ENCODE measurements at regions of chr6 and their contacts with region 1.

Region 1: DNA sequence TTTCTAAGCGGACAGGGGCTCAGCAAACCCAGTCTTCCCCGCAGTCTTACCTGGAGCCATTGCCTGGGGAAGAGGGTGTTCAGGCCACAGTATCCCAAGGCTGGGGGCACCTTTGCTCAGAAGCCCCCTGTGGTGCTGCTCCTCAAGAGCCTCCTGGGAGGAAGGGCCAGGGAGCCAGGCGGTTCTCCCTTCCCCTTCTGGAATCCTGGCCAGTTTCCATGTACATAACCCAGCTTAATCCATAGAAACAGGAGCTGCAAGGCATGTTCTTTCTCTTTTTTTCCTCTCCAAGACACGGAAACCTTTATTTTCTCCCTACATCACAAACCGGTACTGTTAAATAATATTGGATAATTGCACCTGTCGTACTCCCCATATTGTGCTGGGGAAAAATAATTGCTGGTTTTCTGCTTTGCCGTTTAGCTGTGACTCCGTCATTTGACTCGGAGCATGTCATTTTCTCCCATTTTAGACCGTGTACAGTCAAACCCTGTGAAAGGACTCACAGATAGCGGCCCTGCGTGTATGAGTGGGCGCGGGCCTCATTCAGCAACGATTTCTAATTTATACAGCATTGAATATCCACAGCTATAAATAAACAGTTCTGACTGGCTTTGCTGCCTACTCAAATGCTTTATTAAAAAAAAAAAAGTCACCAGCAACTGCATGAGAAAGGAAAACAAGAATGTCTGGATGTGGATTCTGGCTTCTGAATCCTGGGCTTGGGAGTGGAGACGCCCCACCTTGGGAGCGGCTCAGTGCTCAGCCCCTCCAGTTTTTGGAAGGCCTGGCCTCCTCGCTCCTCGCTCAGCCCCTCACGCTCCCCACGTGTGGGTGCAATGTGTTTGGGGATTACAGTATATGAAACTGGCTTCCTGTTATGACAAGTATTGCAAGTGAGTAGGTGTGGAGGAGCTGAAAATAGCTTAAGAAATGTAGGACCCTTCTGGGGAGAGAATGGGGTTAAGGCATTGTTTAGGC is 67.3 kb downstream of the ADTRP start:
- DNase-seq: no peak
- H3K4me3 Mint-ChIP-seq: peak overlapping the region; percentile 54
- H3K27ac Mint-ChIP-seq: peak overlapping the region; percentile 96
- H3K4me1 Mint-ChIP-seq: peaks cover 59% of the 10 kb centered on the region
- H3K27me3 Mint-ChIP-seq: no peaks in the 10 kb centered on the region

Region 2: DNA sequence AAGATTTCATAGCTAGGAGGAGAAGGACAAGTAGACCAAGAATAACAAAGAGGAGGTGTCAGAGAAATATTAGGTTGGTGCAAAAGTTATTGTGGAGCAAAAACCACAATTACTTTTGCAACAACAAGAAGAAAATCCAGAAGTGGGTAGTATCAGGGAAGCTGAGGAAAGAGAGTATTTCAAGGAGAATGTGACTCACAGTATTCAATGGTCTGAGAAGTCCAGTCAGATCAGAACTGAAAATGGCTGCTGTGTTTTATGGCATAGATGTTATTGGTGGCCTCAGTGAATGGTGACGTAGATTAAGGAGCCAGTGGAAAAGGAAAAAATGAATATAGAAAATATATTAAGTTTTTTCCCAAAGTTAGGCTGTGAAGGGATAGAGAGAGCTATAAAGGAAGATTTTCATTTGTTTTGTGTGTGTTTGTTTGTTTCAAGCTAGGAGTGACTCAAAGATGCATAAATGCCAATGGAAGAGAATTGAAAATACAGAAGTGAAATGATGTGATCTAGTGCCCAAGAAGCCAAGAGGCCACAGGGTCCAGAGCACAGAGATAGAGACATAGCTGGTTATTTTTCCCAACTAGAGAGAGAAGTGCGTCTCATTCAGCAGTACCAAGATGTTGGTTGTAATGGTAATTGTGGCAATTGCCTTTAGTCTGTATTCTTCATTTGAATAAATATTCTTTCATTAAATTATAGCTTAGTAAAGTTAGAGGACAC is 45.5 kb before region 1 on chr6:
- intact Hi-C with region 1: loop called (anchors 5 kb)
- DNase-seq: no peak
- H3K4me3 Mint-ChIP-seq: no peak overlapping the region
- H3K27ac Mint-ChIP-seq: no peak overlapping the region
- H3K4me1 Mint-ChIP-seq: peaks cover 9% of the 10 kb centered on the region
- H3K27me3 Mint-ChIP-seq: peaks cover 8% of the 10 kb centered on the region

Region 3: DNA sequence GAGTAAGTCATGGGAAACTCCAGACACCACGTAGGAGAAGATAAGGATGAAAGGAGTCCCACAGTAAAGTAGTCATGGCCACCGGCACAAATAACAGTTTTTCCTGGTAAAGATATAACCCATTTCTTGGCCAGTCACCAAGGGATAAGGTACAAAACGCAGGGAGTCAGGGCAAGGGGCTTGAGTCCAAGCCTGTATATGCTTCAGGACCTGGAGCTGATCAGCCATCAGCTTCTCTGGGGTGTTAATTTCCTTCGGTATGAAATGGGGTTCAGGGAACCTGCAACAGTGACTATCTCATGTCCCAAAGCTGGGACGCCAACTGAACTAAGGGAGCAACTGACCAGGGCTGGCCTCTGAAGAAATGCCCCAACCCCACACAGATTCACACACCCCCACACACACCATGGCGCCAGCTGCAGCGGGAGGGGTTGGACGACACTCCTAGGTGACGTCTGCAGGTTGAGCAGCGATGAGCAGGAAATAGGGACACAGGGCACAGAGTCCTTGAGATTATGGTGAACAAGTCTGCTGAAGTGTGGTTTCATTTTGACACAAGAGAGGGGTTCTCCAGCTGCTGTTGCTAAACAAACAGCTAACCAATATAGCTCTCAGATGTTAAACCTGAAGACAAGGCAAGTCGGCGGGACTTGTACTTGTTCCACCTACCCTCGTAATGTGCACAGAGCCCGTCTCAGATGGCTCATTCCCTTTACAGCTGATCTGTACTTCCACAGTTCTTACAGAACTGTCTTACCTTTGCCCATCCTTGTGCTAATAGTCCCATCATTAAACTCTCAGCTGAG is 74.7 kb after region 1 on chr6:
- intact Hi-C with region 1: loop called (anchors 1 kb)
- DNase-seq: peak; percentile 20
- H3K4me3 Mint-ChIP-seq: peak overlapping the region; percentile 40
- H3K27ac Mint-ChIP-seq: no peak overlapping the region
- H3K4me1 Mint-ChIP-seq: peaks cover 6% of the 10 kb centered on the region
- H3K27me3 Mint-ChIP-seq: no peaks in the 10 kb centered on the region

Region 4: GRCh38 chr6:12051861-12052368 is 340.6 kb after region 1 on chr6:
- intact Hi-C with region 1: loop called (anchors 1 kb)
- DNase-seq: peak; percentile 70
- H3K4me3 Mint-ChIP-seq: peak overlapping the region; percentile 59
- H3K27ac Mint-ChIP-seq: peak overlapping the region; percentile 91
- H3K4me1 Mint-ChIP-seq: peaks cover 69% of the 10 kb centered on the region
- H3K27me3 Mint-ChIP-seq: no peaks in the 10 kb centered on the region

Region 5: GRCh38 chr6:12233693-12234571 is 522.6 kb after region 1 on chr6:
- intact Hi-C with region 1: loop called (anchors 5 kb)
- DNase-seq: peak; percentile 27
- H3K4me3 Mint-ChIP-seq: no peak overlapping the region
- H3K27ac Mint-ChIP-seq: peak overlapping the region; percentile 9
- H3K4me1 Mint-ChIP-seq: peaks cover 44% of the 10 kb centered on the region
- H3K27me3 Mint-ChIP-seq: no peaks in the 10 kb centered on the region

Measured in activated T-helper 2 cell treated with anti-CD3 and anti-CD28 coated beads, Interferon-gamma antibody, Interleukin-2, Interleukin-4, amounts not matched to agents 10 μg/mL and 5 μg/mL and 100 μg/mL, durations not matched to agents 14 hours and 24 hours and 36 hours (primary cell).